HCT116 (cell line): ENCODE measurements at regions of chr4 and their contacts with region 1.

Region 1: DNA sequence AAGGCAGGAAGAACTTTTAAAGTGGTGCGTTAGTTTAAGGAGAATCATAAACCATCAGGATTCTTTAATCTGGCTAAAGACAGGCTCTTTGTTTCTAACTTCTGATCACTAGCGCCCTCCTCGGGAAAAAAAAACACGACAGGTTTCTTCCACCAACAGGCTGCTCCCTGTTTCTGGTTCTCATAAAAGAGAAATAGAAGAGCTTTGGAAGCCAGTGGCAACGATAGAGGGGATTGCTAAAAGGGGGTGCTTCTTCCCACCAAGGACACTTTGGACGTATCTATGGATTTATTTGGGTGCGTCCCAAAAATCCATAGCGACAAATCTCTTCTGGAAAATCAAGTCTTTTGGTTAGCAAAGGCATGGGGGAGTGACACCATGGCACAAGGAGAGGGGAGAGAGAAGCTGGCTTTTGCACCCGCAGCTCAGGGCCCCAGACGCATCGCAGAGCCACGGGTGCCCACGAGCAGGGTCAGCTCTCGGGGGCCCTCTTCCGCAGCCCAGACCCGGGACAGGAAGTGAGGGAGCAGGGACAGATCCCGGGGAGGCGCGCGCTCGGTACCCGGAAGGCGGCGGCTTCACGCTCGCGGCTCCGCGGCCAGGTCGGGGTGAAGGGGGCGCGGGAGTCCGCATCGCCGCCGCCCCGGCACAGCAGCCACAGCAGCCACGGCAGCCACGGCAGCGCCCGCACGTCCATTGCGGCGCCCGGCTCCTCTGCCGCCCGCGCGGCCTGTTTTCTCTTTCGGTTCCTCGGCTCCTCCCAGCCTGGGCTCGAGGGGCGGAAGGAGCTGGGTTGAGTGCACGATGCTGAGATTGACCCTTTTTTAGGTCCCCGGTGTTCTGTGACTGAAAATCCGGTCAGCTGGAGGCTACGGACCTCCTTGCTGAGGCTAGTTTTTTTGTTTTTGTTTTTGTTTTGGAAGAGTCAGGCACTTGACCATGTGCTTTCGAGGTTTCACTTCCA is at the start of gene CTSO:
- DNase-seq: peak; percentile 56
- ATAC-seq: peak; percentile 90
- H3K4me3 ChIP-seq: peak within 1 kb of the TSS; percentile 33 to 56
- H3K27ac ChIP-seq: peak within 1 kb of the TSS; percentile 72
- H3K4me1 ChIP-seq: peaks cover 0 to 6% of the 10 kb centered on the region in 2 experiments; a peak in 1 of 4 replicates
- H3K27me3 ChIP-seq: no peaks in the 10 kb centered on the region
- CTCF ChIP-seq: peak; percentile 46 to 66 (median 65)
- POLR2A ChIP-seq: peak; percentile 15
- RAD21 ChIP-seq: peak; percentile 64
- total RNA-seq, gene CTSO: 0.57 TPM

Region 2: GRCh38 chr4:155442267-155443105 is 510.9 kb before region 1 on chr4:
- CTCF ChIA-PET with region 1: no interaction called
- POLR2A ChIA-PET with region 1: no interaction called
- RAD21 ChIA-PET with region 1: no interaction called
- intact Hi-C with region 1: loop called (anchors 1 kb)
- DNase-seq: peak; percentile 49
- ATAC-seq: peak; percentile 91
- H3K4me3 ChIP-seq: peak overlapping the region; percentile 22 to 37
- H3K27ac ChIP-seq: no peak overlapping the region
- H3K4me1 ChIP-seq: no peaks in the 10 kb centered on the region
- H3K27me3 ChIP-seq: no peaks in the 10 kb centered on the region
- CTCF ChIP-seq: peak; percentile 57 to 98 (median 97); a peak in 5 of 6 replicates
- POLR2A ChIP-seq: no peak
- RAD21 ChIP-seq: peak; percentile 80

Region 3: GRCh38 chr4:155809835-155810234 is 143.6 kb before region 1 on chr4:
- CTCF ChIA-PET with region 1: interaction called, 37 read pairs
- POLR2A ChIA-PET with region 1: interaction called, 4 read pairs
- RAD21 ChIA-PET with region 1: interaction called in 1 of 2 experiments, 5 read pairs
- intact Hi-C with region 1: loop called (anchors 1 kb)
- DNase-seq: peak; percentile 85
- ATAC-seq: peak; percentile 88
- H3K4me3 ChIP-seq: no peak overlapping the region
- H3K27ac ChIP-seq: no peak overlapping the region
- H3K4me1 ChIP-seq: no peaks in the 10 kb centered on the region
- H3K27me3 ChIP-seq: no peaks in the 10 kb centered on the region
- CTCF ChIP-seq: peak; percentile 63 to 77 (median 67)
- POLR2A ChIP-seq: no peak
- RAD21 ChIP-seq: peak; percentile 83